Sigmoid colon (tissue), 7 donors: ENCODE measurements at regions of chr4 and their contacts with region 1.

Region 1: DNA sequence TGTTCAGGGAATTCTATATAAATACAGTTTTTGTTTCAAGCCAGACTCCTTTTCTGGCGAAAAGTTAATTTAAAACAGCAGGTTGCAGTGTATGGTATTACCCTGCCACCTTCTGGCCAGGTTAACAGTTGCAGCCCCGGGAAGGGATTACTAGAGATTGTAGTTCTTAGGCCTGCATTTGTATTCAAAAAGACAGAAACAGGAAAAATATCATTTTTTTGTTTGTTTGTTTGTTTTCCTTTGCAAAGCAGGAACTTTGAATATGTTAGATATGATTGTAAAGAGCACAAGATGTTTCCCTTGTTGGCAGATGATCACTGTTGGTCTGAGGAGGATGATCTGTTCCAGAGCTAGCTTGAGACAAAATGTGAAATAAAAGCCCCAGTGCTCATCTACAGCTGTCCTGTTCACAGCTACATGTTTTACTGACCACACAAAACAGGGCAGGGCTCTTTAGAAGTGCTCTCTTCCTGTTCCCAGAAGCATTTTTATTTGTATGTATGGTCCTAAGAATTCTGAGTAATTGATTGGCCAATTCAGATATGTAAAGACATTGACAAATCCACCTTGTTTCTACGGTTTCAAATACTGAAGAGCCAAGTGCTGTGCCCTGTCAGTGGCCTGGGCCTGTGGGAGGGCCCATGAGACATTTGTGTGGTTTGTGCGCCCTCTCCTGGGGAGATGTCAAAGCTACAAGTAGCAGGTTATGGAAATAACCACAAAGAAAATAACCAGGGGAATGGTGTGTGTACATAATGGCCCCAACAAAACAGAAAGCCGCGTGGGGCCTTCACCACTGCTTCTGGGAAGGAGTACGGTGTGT is 57.9 kb downstream of the CLDN22 start:
- DNase-seq: peak; percentile 89
- H3K4me3 ChIP-seq: no peak overlapping the region
- H3K27ac ChIP-seq: peak overlapping the region in 3 of 4 donors; percentile 3 to 71 (median 67)
- H3K4me1 ChIP-seq: peaks cover 0 to 14% (median 10%) of the 10 kb centered on the region in 4 donors
- H3K27me3 ChIP-seq: no peaks in the 10 kb centered on the region
- CTCF ChIP-seq: peak; percentile 67 to 81 (median 72)
- EP300 ChIP-seq: no peak
- POLR2A ChIP-seq: no peak

Region 2: GRCh38 chr4:182938205-182938645 is 323.9 kb before region 1 on chr4:
- intact Hi-C with region 1: loop called (anchors 1 kb)
- DNase-seq: peak; percentile 77
- H3K4me3 ChIP-seq: no peak overlapping the region
- H3K27ac ChIP-seq: no peak overlapping the region
- H3K4me1 ChIP-seq: no peaks in the 10 kb centered on the region
- H3K27me3 ChIP-seq: no peaks in the 10 kb centered on the region
- CTCF ChIP-seq: peak; percentile 65 to 85 (median 76)
- EP300 ChIP-seq: no peak
- POLR2A ChIP-seq: no peak